Calu3 (cell line): ENCODE measurements at regions of chr17 and their contacts with region 1.

Region 1: GRCh38 chr17:40038882-40039513 is 15.2 kb downstream of the MED24 start:
- DNase-seq: peak; percentile 92
- H3K4me3 Mint-ChIP-seq: no peak overlapping the region
- H3K27ac Mint-ChIP-seq: no peak overlapping the region
- H3K4me1 Mint-ChIP-seq: peaks cover 8% of the 10 kb centered on the region
- H3K27me3 Mint-ChIP-seq: no peaks in the 10 kb centered on the region
- CTCF ChIP-seq: no peak

Region 2: DNA sequence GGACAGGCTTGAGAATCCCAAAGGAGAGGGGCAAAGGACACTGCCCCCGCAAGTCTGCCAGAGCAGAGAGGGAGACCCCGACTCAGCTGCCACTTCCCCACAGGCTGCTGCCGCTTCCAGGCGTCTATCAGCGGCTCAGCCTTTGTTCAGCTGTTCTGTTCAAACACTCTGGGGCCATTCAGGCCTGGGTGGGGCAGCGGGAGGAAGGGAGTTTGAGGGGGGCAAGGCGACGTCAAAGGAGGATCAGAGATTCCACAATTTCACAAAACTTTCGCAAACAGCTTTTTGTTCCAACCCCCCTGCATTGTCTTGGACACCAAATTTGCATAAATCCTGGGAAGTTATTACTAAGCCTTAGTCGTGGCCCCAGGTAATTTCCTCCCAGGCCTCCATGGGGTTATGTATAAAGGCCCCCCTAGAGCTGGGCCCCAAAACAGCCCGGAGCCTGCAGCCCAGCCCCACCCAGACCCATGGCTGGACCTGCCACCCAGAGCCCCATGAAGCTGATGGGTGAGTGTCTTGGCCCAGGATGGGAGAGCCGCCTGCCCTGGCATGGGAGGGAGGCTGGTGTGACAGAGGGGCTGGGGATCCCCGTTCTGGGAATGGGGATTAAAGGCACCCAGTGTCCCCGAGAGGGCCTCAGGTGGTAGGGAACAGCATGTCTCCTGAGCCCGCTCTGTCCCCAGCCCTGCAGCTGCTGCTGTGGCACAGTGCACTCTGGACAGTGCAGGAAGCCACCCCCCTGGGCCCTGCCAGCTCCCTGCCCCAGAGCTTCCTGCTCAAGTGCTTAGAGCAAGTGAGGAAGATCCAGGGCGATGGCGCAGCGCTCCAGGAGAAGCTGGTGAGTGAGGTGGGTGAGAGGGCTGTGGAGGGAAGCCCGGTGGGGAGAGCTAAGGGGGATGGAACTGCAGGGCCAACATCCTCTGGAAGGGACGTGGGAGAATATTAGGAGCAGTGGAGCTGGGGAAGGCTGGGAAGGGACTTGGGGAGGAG is 23.7 kb before region 1 on chr17 and contains the start of gene CSF3:
- CTCF ChIA-PET with region 1: interaction called, 774 read pairs
- intact Hi-C with region 1: no loop called
- DNase-seq: peak; percentile 66
- H3K4me3 Mint-ChIP-seq: no peak within 1 kb of the TSS
- H3K27ac Mint-ChIP-seq: no peak within 1 kb of the TSS
- H3K4me1 Mint-ChIP-seq: peaks cover 10% of the 10 kb centered on the region
- H3K27me3 Mint-ChIP-seq: peaks cover 74% of the 10 kb centered on the region
- CTCF ChIP-seq: no peak
- total RNA-seq, gene CSF3: 0.38 TPM in 1 of 2 replicates, not detected in the other

Region 3: DNA sequence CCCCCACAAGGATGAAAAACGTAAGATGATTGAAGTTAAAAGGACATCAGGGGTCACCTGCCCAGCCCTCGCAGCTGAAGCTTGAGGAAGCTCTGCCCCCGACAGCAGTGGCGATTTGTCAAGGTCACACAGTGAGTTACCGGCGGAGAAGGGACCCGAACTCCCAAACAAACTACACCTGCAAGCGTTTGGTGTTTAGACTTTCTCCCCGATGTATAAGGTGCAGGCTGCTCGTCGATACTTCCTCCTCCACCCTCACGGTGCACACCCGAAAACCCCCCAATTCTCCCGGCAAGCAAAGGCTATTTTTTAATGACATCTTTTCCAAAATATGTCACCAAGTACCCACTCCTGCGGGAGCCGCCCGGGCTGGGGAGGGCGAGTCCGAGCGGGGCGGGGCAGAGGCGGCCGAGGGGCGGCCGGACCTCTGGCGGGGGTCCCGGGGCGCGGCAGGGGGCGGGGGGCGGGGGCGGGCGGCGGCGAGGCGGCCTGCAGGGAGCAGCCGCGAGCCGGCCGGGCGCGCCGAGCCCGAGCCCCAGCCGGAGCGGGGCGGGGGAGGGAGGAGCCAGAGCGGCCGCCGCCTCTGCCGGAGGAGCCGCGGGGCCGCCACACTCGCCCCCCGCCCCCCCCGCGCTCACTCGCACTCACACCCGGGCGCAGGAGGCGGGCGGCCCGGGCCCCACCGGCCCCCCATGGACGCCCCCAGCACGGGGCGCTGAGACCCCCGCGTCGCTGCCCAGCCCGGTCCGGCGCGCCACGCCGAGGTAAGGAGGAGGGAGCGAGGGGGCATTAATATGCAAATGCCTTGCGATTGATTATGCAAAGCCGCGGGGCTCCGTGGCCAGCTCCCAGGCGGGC is 23.6 kb after region 1 on chr17 and contains the start of gene THRA:
- CTCF ChIA-PET with region 1: interaction called, 57 read pairs
- intact Hi-C with region 1: no loop called
- DNase-seq: peak; percentile 100
- H3K4me3 Mint-ChIP-seq: peak within 1 kb of the TSS; percentile 54
- H3K27ac Mint-ChIP-seq: peak within 1 kb of the TSS; percentile 27
- H3K4me1 Mint-ChIP-seq: peaks cover 55% of the 10 kb centered on the region
- H3K27me3 Mint-ChIP-seq: peaks cover 52% of the 10 kb centered on the region
- CTCF ChIP-seq: no peak
- total RNA-seq, gene THRA: 107 and 133 TPM in 2 replicates

Region 4: DNA sequence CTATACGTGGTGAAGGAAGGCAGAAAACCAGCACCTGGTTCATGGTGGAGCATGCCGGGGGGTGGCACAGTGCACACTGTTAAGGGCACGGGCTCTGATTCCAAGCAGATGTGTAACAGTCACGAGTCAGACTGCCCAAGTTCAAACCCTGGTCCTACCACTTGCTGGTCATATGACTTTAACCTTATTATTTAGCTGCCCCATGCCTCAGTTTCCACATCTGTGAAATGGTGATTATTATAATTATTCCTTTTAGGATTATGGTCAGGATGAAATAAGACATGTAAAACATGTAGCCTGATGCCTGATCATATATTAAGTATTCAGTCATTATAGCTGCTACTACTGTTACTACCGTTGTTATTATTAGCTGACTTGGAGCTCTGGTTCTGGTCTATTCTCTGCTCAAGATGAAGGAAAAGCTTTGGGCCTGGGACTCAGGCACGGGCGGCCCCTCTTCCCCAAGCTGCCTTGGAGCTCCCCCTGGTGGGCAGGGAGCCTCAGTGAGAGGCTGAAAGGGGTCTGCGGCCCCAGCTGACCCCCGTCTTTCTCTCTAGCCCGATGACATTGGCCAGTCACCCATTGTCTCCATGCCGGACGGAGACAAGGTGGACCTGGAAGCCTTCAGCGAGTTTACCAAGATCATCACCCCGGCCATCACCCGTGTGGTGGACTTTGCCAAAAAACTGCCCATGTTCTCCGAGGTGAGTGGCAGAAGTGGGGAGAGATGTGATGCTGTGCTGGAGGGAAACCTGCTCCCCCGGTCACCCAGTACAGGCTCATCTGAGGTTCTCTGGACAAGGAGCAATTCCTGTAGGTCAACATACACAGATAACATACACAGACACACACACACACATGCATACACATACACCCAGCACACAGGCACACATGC is 47.4 kb after region 1 on chr17:
- CTCF ChIA-PET with region 1: interaction called, 53 read pairs
- intact Hi-C with region 1: loop called (anchors 1 kb)
- DNase-seq: peak; percentile 100
- H3K4me3 Mint-ChIP-seq: no peak overlapping the region
- H3K27ac Mint-ChIP-seq: no peak overlapping the region
- H3K4me1 Mint-ChIP-seq: no peaks in the 10 kb centered on the region
- H3K27me3 Mint-ChIP-seq: no peaks in the 10 kb centered on the region
- CTCF ChIP-seq: no peak

Region 5: GRCh38 chr17:40104594-40105486 is 65.8 kb after region 1 on chr17:
- CTCF ChIA-PET with region 1: interaction called, 90 read pairs
- intact Hi-C with region 1: no loop called
- DNase-seq: peak; percentile 88
- H3K4me3 Mint-ChIP-seq: no peak overlapping the region
- H3K27ac Mint-ChIP-seq: peak overlapping the region; percentile 0
- H3K4me1 Mint-ChIP-seq: peaks cover 92% of the 10 kb centered on the region
- H3K27me3 Mint-ChIP-seq: no peaks in the 10 kb centered on the region
- CTCF ChIP-seq: no peak